ENCODE measurements at regions of chr14 and their contacts with region 1.

Region 1: GRCh38 chr14:76956316-76957090 is 72.0 kb downstream of the IRF2BPL start:
- DNase-seq: peak; percentile 96
- ATAC-seq: peak; percentile 64
- H3K4me3 Mint-ChIP-seq: peak overlapping the region; percentile 79
- H3K27ac Mint-ChIP-seq: peak overlapping the region; percentile 94
- H3K4me1 Mint-ChIP-seq: peaks cover 68% of the 10 kb centered on the region
- H3K27me3 Mint-ChIP-seq: no peaks in the 10 kb centered on the region
- CTCF ChIP-seq: no peak

Region 2: DNA sequence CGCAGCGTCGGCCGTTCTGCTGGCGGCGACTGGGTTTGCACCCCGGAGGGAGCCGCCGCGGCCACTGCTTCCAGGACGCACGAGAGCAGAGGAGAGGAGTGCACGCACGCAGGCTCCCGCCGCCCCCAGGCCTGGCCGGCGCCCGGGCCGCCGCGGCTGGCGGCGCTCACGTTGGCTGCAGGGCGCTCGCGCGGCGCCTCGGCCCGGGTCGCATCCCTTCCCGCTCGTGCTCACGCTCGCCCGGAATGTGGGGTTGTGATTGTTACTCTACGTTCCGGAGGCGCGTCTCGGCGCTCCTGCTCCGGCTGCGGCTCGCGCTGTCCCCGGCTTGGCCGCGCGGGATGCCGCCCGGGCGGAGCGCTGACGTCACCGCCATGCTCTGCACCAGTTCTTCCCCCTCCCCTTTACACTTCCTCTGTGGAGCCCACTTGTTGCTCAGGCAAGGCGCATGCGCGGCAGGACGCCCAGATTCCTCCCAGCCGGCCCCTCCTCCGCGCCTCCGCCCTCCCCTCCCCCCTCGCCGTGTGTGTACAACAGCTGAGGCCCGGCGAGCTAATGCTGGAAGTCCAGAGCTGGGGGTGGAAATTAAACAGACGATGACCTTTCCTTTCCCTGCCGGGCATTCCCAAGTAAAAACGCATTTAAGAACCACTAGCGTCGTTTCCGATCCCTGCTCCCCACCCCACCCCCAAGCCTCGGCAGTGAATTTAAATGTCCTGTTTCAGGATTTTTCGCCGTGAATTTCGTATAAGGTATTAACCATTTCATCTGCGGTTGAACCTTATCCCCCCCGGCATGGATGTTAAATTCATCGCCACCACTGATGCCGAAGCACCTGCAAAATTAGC is 72.1 kb after region 1 on chr14 and contains the start of gene IRF2BPL:
- CTCF ChIA-PET with region 1: interaction called, 11 read pairs
- POLR2A ChIA-PET with region 1: interaction called, 27 read pairs
- intact Hi-C with region 1: loop called (anchors 2 kb)
- DNase-seq: peak; percentile 95
- ATAC-seq: peak; percentile 73
- H3K4me3 Mint-ChIP-seq: peak within 1 kb of the TSS; percentile 97
- H3K27ac Mint-ChIP-seq: peak within 1 kb of the TSS; percentile 94
- H3K4me1 Mint-ChIP-seq: peaks cover 51% of the 10 kb centered on the region
- H3K27me3 Mint-ChIP-seq: no peaks in the 10 kb centered on the region
- CTCF ChIP-seq: no peak
- total RNA-seq, gene IRF2BPL: 36.2 to 37.7 TPM

Region 3: GRCh38 chr14:77033622-77034521 is 77.4 kb after region 1 on chr14:
- CTCF ChIA-PET with region 1: interaction called, 5 read pairs
- POLR2A ChIA-PET with region 1: interaction called, 42 read pairs
- intact Hi-C with region 1: loop called (anchors 2 kb)
- DNase-seq: peak; percentile 93
- ATAC-seq: peak; percentile 72
- H3K4me3 Mint-ChIP-seq: peak overlapping the region; percentile 87
- H3K27ac Mint-ChIP-seq: peak overlapping the region; percentile 98
- H3K4me1 Mint-ChIP-seq: peaks cover 69% of the 10 kb centered on the region
- H3K27me3 Mint-ChIP-seq: no peaks in the 10 kb centered on the region
- CTCF ChIP-seq: no peak

Measured in activated CD8-positive, alpha-beta T cell treated with anti-CD3 and anti-CD28 coated beads for 36 hours (primary cell).